ENCODE measurements at regions of chr4 and their contacts with region 1.

Region 1: DNA sequence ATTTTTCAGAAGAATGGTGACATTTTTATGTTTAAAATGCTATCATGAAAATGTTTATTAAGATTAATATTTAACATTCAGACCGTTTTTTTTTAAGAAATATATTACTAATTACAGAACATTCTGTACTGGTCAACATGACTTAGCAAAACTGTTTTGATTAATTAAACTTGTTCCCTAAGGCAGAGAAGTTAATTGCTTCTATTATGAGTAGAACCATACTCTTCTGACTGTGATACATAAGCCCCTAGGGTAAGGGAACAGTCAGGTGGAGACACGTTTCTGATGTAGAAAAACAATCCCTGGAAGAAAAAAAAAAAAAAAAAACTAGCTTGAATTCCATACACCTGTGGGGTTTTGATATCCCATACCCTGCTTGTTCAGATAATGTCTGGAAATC is 97.4 kb downstream of the GPM6A start:
- DNase-seq: no peak
- H3K4me3 ChIP-seq: no peak overlapping the region
- H3K27ac ChIP-seq: peak overlapping the region; percentile 13 to 75 (median 68)
- H3K4me1 ChIP-seq: peaks cover 0 to 47% (median 40%) of the 10 kb centered on the region in 4 donors
- H3K27me3 ChIP-seq: no peaks in the 10 kb centered on the region
- CTCF ChIP-seq: no peak
- EP300 ChIP-seq: no peak
- POLR2A ChIP-seq: no peak

Region 2: DNA sequence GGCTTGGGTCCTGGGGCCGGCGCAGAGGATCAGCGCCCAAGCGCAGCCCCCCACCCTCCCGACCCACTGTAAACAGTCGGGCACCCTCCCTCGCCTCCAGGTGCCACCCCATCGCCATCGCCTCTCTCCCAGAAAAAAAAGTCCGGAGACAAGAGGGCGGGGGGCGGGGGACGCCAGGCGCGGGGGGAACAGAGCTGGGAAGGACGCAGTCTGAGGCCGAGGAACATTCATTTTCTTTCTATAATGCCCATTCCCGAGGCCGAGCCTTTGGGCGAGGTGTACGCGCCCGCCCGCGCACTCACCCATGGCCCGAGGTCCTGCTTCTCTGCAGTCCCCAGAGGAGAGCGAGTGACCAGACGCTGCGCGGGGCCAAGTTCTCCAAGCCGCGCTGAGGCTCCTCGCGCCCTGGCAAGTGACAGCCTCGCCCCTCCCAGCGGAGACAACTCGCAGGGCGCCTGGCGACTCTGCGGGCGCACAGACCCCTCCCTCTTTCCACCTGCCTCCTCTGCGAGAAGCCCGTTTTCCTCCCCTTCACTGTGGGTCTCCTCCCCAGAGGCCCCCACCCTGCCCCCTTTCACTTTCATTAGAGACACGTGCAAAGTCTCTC is 287.4 kb after region 1 on chr4:
- intact Hi-C with region 1: loop called (anchors 5 kb)
- DNase-seq: no peak
- H3K4me3 ChIP-seq: peak overlapping the region; percentile 72 to 82 (median 75)
- H3K27ac ChIP-seq: peak overlapping the region; percentile 89 to 91 (median 90)
- H3K4me1 ChIP-seq: peaks cover 9 to 47% (median 35%) of the 10 kb centered on the region in 4 donors
- H3K27me3 ChIP-seq: peaks cover 0 to 6% (median 0%) of the 10 kb centered on the region in 4 donors
- CTCF ChIP-seq: no peak
- EP300 ChIP-seq: no peak
- POLR2A ChIP-seq: no peak

Measured in esophagus muscularis mucosa (tissue), 4 donors.